WTC11 (cell line): ENCODE measurements at regions of chr1 and their contacts with region 1.

Region 1: DNA sequence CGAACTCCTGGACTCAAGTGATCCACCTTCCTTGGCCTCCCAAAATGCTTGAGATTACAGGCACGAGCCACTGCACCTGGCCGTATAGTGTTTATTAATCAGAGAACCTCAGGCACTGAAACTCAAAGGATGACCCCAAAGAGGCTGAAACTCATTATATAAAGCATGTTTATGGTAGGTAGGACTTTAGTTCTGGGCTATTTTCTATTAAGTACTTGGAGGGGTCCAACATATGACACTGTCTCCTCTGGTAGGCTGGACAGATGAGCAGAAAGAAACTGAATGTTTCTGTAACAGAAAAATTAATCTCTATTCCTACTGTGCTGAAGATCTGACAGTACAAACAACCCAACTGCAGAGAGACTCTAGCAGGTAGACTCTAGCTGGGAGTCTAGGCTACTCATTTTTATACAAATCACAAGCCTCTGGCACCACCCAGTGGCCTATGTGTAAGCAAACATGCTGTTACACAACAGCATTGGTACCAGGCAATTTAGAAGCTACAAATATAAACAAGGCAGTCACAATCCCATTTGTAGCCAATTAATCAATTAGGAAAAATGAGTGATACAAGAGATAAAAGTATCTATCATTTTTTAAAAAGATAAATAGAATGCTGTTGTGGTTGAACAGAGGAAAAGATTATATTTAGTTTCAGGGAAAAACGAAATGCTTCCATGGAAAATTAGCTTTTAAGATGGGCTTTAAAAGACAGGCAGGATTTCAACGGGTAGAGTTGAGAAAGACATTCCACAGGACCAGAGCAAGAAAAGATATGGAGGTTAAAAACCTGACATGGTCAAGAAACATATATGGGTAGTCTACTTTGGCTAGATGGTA is 10.4 kb downstream of the DCAF8 start:
- DNase-seq: peak; percentile 63
- ATAC-seq: peak; percentile 99
- H3K4me3 Mint-ChIP-seq: no peak overlapping the region
- H3K27ac Mint-ChIP-seq: peak overlapping the region; percentile 91
- H3K4me1 Mint-ChIP-seq: peaks cover 6% of the 10 kb centered on the region
- H3K27me3 Mint-ChIP-seq: no peaks in the 10 kb centered on the region
- CTCF ChIP-seq: peak; percentile 37; the same call in 1 of the 2 replicates

Region 2: GRCh38 chr1:159839116-159839849 is 412.6 kb before region 1 on chr1:
- CTCF ChIA-PET with region 1: no interaction called
- POLR2A ChIA-PET with region 1: no interaction called
- DNase-seq: no peak
- ATAC-seq: no peak
- H3K4me3 Mint-ChIP-seq: no peak overlapping the region
- H3K27ac Mint-ChIP-seq: no peak overlapping the region
- H3K4me1 Mint-ChIP-seq: peaks cover 9% of the 10 kb centered on the region
- H3K27me3 Mint-ChIP-seq: no peaks in the 10 kb centered on the region; the same call in 1 of the 2 replicates
- CTCF ChIP-seq: no peak

Region 3: GRCh38 chr1:160046494-160047110 is 205.3 kb before region 1 on chr1:
- CTCF ChIA-PET with region 1: interaction called, 15 read pairs
- POLR2A ChIA-PET with region 1: no interaction called
- DNase-seq: peak; percentile 61
- ATAC-seq: peak; percentile 88
- H3K4me3 Mint-ChIP-seq: peak overlapping the region; percentile 26; the same call in 1 of the 2 replicates
- H3K27ac Mint-ChIP-seq: no peak overlapping the region
- H3K4me1 Mint-ChIP-seq: peaks cover 30% of the 10 kb centered on the region
- H3K27me3 Mint-ChIP-seq: peaks cover 7% of the 10 kb centered on the region
- CTCF ChIP-seq: peak; percentile 57; the same call in 1 of the 2 replicates

Region 4: GRCh38 chr1:160085686-160086455 is 166.0 kb before region 1 on chr1:
- CTCF ChIA-PET with region 1: interaction called, 62 read pairs
- POLR2A ChIA-PET with region 1: no interaction called
- DNase-seq: peak; percentile 94
- ATAC-seq: peak; percentile 74
- H3K4me3 Mint-ChIP-seq: no peak overlapping the region
- H3K27ac Mint-ChIP-seq: no peak overlapping the region
- H3K4me1 Mint-ChIP-seq: peaks cover 19% of the 10 kb centered on the region
- H3K27me3 Mint-ChIP-seq: peaks cover 51% of the 10 kb centered on the region
- CTCF ChIP-seq: peak; percentile 92

Region 5: GRCh38 chr1:160117709-160118183 is 134.2 kb before region 1 on chr1:
- CTCF ChIA-PET with region 1: interaction called, 20 read pairs
- POLR2A ChIA-PET with region 1: no interaction called
- DNase-seq: no peak
- ATAC-seq: peak; percentile 40; the same call in 1 of the 2 replicates
- H3K4me3 Mint-ChIP-seq: 0 out of 2 replicates have a peak overlapping the region, but pooled peaks have one; percentile 16
- H3K27ac Mint-ChIP-seq: no peak overlapping the region
- H3K4me1 Mint-ChIP-seq: peaks cover 58% of the 10 kb centered on the region
- H3K27me3 Mint-ChIP-seq: peaks cover under 1% of the 10 kb centered on the region; the same call in 1 of the 2 replicates
- CTCF ChIP-seq: no peak

Region 6: DNA sequence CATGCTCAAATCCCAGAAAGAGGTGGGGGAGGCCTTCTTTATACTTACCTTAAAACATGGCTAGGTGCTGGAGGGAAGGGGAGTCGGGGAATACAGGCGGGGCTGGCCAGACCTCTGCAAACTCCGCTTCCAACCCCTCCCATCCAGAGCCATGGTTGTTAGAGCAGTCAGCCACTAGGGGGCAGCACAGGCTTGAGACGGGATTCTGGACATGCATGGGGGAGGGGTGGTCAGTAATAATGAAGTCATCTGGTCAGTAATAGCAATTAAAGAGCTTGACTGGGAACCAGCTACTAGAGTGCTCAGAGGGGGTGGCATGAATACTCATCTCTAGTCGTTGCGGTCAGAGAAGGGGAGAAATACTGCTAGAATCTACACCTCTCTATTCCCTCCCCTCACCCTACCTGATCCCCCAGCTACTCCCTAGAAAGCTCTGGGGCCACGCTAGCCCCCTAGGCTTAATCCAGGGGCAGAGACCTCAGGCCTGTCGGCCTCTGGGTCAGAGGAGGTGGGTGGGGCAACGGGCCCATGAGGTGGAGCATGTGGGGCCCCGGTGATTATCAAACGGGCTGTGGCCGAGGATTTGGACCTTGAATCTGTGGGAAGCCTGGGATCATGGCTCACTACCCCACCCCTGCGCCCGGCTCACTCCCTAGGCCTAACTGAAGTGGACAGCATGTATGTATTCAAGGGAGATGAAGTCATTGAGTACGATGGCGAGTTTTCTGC is 58.7 kb before region 1 on chr1:
- CTCF ChIA-PET with region 1: interaction called, 56 read pairs
- POLR2A ChIA-PET with region 1: interaction called, 6 read pairs
- DNase-seq: peak; percentile 96
- ATAC-seq: peak; percentile 88
- H3K4me3 Mint-ChIP-seq: no peak overlapping the region
- H3K27ac Mint-ChIP-seq: no peak overlapping the region
- H3K4me1 Mint-ChIP-seq: peaks cover 13% of the 10 kb centered on the region
- H3K27me3 Mint-ChIP-seq: no peaks in the 10 kb centered on the region; the same call in 1 of the 2 replicates
- CTCF ChIP-seq: peak; percentile 95

Region 7: DNA sequence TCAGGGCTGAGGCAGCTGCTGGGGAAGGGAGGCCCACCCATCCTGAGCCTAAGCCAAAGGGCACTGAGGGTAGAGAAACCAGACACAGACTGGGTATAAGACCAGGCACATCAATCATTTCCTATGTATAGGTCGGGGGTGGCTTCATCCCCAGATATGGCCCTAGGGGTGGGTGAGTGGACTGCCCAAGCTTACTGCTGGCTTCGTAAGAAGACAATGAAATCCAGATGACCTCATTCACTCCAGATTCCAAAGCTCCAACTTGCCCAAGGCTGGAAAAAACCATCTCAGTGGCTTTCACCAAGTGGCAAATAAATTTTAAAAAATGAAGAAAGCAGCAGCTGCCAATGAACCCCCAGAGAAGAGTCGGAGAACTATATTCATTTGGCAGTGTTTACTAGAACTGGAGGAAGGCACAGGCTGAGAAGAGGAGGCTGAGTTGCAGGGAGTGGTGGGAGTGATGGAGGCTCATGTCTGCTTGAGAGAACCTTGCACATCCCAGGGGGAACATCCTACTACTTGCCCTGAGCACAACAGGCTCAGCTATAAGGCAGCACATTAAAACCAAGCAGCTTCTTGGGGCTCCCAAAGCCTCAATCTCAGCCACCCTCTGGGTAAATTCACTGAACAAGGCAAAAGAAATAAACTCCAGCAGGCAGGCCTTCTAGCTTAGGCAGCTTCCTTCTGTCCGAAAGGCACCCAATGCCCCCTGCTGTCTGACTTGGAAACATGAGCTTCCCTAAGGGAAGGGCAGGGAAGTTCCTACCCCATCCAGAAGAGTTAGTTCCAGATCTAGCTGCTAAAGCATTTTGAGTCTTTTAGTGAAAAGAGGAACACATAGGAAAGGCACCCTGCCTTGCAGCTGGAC is 32.6 kb before region 1 on chr1:
- CTCF ChIA-PET with region 1: interaction called, 54 read pairs
- POLR2A ChIA-PET with region 1: interaction called, 5 read pairs
- DNase-seq: peak; percentile 69
- ATAC-seq: peak; percentile 87
- H3K4me3 Mint-ChIP-seq: no peak overlapping the region
- H3K27ac Mint-ChIP-seq: peak overlapping the region; percentile 79
- H3K4me1 Mint-ChIP-seq: peaks cover 15% of the 10 kb centered on the region
- H3K27me3 Mint-ChIP-seq: no peaks in the 10 kb centered on the region
- CTCF ChIP-seq: no peak

Region 8: DNA sequence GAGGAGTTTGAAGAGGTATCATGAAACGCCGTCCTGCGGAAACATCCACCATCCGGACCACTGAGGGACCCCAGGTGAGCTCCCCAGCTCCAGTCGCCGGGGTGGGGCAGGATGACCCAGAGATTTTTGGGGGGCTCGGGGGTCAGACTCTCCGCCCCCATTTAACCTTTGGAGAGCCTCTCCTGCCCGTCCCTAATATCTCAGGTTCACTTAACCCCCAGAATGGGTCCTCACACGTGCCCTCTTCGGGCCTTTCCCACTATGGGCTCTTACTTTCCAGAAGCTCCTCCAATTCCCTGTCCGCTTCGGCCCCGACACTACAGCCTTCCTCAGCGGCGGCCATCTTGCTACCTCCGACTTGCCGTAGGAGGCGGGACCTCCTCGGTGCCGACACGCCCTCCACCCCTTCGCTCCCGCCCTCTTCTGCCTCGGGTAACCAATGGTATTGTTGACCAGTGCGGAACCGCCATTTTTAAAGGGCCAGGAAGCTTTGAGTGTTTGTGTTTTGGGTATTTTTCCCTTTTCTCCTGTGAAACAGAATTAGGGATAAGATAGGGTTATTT is 33.0 kb after region 1 on chr1 and contains the start of gene PEX19:
- CTCF ChIA-PET with region 1: interaction called, 43 read pairs
- POLR2A ChIA-PET with region 1: no interaction called
- DNase-seq: peak; percentile 96
- ATAC-seq: peak; percentile 97
- H3K4me3 Mint-ChIP-seq: peak within 1 kb of the TSS; percentile 91
- H3K27ac Mint-ChIP-seq: peak within 1 kb of the TSS; percentile 97
- H3K4me1 Mint-ChIP-seq: peaks cover 22% of the 10 kb centered on the region
- H3K27me3 Mint-ChIP-seq: no peaks in the 10 kb centered on the region
- CTCF ChIP-seq: no peak
- total RNA-seq, gene PEX19: 80.6 to 85.5 TPM (median 85.2 TPM) in 3 replicates